Heart left ventricle (tissue), 16 donors: ENCODE measurements at regions of chr6 and their contacts with region 1.

Region 1: DNA sequence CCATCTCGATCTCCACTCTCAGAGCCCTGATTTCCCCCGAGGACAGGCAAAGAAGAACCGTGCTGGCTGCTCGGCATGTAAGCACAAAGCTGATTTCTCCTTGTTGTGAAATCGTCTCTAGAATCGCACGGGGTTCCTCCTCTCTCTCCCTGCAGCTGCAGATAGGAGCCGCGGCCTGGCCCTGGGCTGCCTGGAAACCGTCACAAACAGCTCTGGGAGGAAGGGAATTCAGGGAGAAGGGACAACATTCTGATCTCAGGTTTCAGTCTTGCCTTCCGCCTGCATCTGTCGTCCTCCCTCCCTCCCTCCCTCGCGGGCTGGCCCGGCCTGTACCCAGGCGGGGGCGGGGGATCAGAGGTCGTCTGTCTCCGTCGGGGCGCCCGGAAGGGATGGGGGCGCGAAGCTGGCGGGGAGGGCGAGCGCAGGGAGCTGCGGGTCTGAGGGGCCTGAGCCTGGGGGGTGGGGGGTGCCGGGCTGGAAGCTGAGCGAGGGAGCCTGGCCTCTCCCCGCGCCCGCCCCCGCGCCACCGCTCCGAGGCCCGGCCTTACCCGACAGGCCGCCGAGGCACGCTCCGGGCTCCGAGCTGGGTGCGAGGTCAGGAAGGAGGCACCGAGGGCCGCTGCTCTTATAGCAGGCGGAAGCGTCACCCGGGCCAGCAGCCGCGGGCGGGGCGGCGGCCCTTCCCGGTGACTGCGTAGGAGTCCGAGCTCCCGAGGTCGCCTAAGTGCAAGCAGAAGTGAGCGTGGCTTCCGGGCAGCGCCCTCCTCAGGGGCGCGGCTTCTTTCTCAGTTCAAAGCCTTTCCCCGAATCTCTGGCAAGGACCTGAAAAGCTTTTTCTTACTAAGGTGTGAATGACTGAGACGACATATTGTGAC is at the start of gene SERPINB1:
- DNase-seq: peak; percentile 91 to 96 (median 95)
- ATAC-seq: peak; percentile 86 to 94 (median 90)
- H3K4me3 ChIP-seq: peak within 1 kb of the TSS; percentile 39 to 82 (median 67)
- H3K27ac ChIP-seq: peak within 1 kb of the TSS; percentile 89 to 99 (median 97)
- H3K4me1 ChIP-seq: peaks cover 9 to 66% (median 34%) of the 10 kb centered on the region in 12 donors
- H3K27me3 ChIP-seq: no peaks in the 10 kb centered on the region
- CTCF ChIP-seq: peak in 7 of 12 donors; percentile 10 to 53 (median 27)
- POLR2A ChIP-seq: peak in 1 of 2 donors; percentile 34
- total RNA-seq, gene SERPINB1: 15.6 to 55.6 (median 23.0) TPM

Region 2: GRCh38 chr6:2634139-2634964 is 207.1 kb before region 1 on chr6:
- intact Hi-C with region 1: no loop called
- DNase-seq: peak; percentile 86 to 94 (median 89)
- ATAC-seq: peak; percentile 85 to 94 (median 91)
- H3K4me3 ChIP-seq: peak overlapping the region in 11 of 12 donors; percentile 32 to 70 (median 57)
- H3K27ac ChIP-seq: peak overlapping the region; percentile 20 to 86 (median 69)
- H3K4me1 ChIP-seq: peaks cover 0 to 34% (median 15%) of the 10 kb centered on the region in 12 donors
- H3K27me3 ChIP-seq: no peaks in the 10 kb centered on the region
- CTCF ChIP-seq: peak; percentile 97 to 100 (median 99)
- POLR2A ChIP-seq: no peak

Region 3: DNA sequence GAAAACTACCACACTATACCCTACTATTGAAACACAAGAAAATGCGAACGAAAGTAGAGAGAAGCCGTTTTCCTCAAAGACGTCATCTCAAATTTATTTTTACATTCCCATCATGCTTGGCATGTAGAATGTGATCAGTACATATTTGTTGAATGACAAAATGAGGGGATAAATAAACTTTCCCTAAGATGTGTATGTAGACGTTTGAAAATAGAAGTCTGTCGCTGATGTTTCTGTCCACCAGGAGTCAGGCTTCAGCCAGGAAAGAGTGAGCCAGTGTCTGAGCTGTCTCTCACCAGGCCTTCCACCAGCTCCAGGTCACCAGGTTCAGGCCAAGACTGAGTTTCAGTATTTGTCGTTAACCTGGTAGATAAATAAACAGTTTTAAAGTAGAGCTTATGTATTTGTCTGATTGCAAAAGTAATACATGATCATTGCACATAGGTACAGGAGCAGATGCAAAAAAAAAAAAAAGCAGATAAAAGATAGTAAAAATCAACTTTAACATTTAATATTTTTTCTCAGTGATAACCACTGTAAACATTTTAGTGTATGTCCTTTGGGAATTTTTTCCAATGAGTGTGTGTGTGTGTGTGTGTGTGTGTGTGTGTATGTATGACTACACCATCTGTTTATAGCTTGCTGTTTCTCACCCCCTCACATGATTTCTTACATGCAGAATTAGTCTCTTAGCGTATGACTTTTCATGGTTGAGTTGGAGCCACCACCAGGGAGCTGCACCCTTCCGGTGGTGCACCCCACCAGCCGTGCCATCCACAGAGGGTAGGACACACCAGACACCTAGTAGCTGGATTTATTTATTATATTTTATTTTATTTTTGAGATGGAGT is 50.2 kb before region 1 on chr6:
- intact Hi-C with region 1: loop called (anchors 1 to 5 kb)
- DNase-seq: peak in 4 of 5 donors; percentile 68 to 78 (median 72)
- ATAC-seq: peak; percentile 82 to 91 (median 86)
- H3K4me3 ChIP-seq: peak overlapping the region in 2 of 12 donors; percentile 5 to 8
- H3K27ac ChIP-seq: peak overlapping the region; percentile 35 to 88 (median 68)
- H3K4me1 ChIP-seq: peaks cover 0 to 59% (median 25%) of the 10 kb centered on the region in 12 donors
- H3K27me3 ChIP-seq: no peaks in the 10 kb centered on the region
- CTCF ChIP-seq: peak; percentile 62 to 89 (median 72)
- POLR2A ChIP-seq: no peak

Region 4: DNA sequence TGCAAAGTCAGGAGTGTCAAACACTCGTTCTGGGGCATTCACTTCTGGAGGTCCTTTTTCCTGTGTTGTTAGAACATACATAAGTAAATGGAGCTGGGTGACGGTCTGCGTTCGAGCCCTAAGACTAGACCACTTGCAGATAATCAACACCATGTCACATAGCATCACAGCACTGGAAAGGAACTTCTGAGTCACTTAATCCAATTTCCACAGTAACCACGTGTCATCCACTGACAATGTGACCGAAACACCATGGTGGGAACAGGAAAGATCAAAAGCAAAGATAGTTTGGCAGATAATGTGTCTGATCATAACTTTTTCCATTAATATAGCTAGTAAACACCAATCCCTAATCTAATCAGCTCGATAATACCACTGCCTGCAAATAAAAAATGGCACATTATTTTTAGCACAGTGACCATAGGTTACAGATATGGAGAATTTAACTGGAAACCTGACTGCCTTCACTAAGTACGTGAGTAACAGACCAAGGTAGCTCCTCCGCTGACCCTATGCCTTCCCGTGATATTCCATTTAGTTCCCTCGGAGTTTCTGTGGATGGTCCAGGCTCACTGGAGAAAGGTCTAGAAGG is 41.5 kb before region 1 on chr6:
- intact Hi-C with region 1: loop called in 1 of 10 experiments (anchors 5 kb)
- DNase-seq: no peak
- ATAC-seq: peak; percentile 31 to 67 (median 44)
- H3K4me3 ChIP-seq: no peak overlapping the region
- H3K27ac ChIP-seq: peak overlapping the region in 2 of 12 donors; percentile 30 to 40
- H3K4me1 ChIP-seq: peaks cover 0 to 35% (median 5%) of the 10 kb centered on the region in 12 donors
- H3K27me3 ChIP-seq: no peaks in the 10 kb centered on the region
- CTCF ChIP-seq: no peak
- POLR2A ChIP-seq: no peak

Region 5: GRCh38 chr6:3052481-3053230 is 211.2 kb after region 1 on chr6:
- intact Hi-C with region 1: loop called in 8 of 10 experiments (anchors 5 to 10 kb)
- DNase-seq: no peak
- ATAC-seq: no peak
- H3K4me3 ChIP-seq: peak overlapping the region in 1 of 12 donors; percentile 59
- H3K27ac ChIP-seq: peak overlapping the region in 1 of 12 donors; percentile 69
- H3K4me1 ChIP-seq: peaks cover 0 to 31% (median 16%) of the 10 kb centered on the region in 12 donors
- H3K27me3 ChIP-seq: no peaks in the 10 kb centered on the region
- CTCF ChIP-seq: no peak
- POLR2A ChIP-seq: no peak

Region 6: GRCh38 chr6:3068329-3069214 is 227.1 kb after region 1 on chr6 and contains the start of gene RIPK1:
- intact Hi-C with region 1: loop called in 1 of 10 experiments (anchors 5 kb)
- DNase-seq: peak; percentile 95 to 97 (median 96)
- ATAC-seq: peak; percentile 87 to 92 (median 90)
- H3K4me3 ChIP-seq: peak within 1 kb of the TSS; percentile 82 to 100 (median 98)
- H3K27ac ChIP-seq: peak within 1 kb of the TSS; percentile 99 to 100 (median 100)
- H3K4me1 ChIP-seq: peaks cover 5 to 55% (median 33%) of the 10 kb centered on the region in 12 donors
- H3K27me3 ChIP-seq: no peaks in the 10 kb centered on the region
- CTCF ChIP-seq: peak in 9 of 12 donors; percentile 5 to 60 (median 41)
- POLR2A ChIP-seq: peak; percentile 50 to 87
- total RNA-seq, gene RIPK1: 5.3 to 16.3 (median 7.1) TPM